Calu3 (cell line): ENCODE measurements at regions of chr6 and their contacts with region 1.

Region 1: DNA sequence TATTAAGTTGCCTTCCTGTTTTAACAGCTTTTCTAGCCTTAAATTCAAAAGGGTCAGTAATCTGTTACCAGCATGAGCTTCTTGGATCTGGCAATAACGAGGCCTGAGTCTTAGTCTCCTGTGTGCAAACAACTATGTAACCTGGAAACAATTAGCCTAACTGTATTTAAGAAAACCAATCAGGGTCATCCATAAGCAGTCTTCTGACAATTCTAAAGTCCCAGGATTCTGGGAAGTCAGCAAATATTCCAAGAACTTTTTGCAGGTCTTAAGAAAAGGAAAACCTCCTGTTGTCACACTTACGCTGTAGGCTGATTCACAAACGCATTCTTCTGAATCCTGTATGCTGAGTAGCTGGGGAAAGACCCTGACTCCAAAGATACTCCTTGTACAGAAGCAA is 90.4 kb downstream of the COL12A1 start:
- DNase-seq: no peak
- H3K4me3 Mint-ChIP-seq: peak overlapping the region; percentile 46
- H3K27ac Mint-ChIP-seq: peak overlapping the region; percentile 77
- H3K4me1 Mint-ChIP-seq: peaks cover 48% of the 10 kb centered on the region
- H3K27me3 Mint-ChIP-seq: no peaks in the 10 kb centered on the region
- CTCF ChIP-seq: no peak

Region 2: DNA sequence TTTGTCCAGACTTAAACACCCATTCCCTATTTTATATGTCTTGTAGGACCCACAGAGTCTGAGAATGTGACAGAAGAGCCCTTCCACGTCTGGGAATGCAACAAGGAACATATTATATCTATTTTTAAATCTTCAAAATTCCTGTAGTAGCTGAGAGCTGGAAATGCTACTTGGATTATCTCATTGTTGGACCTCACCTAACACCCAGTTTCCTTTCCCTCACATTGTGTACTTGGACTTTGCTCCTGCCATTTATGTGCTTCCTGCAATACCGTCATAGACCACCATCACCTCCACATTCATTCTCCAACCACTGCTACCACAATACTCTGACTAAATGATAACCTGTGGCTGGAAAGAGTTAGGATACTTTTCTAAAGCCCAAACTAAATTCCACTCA is 245.1 kb before region 1 on chr6:
- CTCF ChIA-PET with region 1: no interaction called
- intact Hi-C with region 1: loop called (anchors 10 kb)
- DNase-seq: peak; percentile 51
- H3K4me3 Mint-ChIP-seq: no peak overlapping the region
- H3K27ac Mint-ChIP-seq: peak overlapping the region; percentile 29
- H3K4me1 Mint-ChIP-seq: peaks cover 42% of the 10 kb centered on the region
- H3K27me3 Mint-ChIP-seq: no peaks in the 10 kb centered on the region
- CTCF ChIP-seq: no peak

Region 3: GRCh38 chr6:76134651-76135050 is 1019.2 kb after region 1 on chr6:
- CTCF ChIA-PET with region 1: no interaction called
- intact Hi-C with region 1: no loop called
- DNase-seq: no peak
- H3K4me3 Mint-ChIP-seq: no peak overlapping the region
- H3K27ac Mint-ChIP-seq: no peak overlapping the region
- H3K4me1 Mint-ChIP-seq: peaks cover 9% of the 10 kb centered on the region
- H3K27me3 Mint-ChIP-seq: no peaks in the 10 kb centered on the region
- CTCF ChIP-seq: no peak